Ascending aorta (tissue), 2 donors: ENCODE measurements at regions of chr5 and their contacts with region 1.

Region 1: DNA sequence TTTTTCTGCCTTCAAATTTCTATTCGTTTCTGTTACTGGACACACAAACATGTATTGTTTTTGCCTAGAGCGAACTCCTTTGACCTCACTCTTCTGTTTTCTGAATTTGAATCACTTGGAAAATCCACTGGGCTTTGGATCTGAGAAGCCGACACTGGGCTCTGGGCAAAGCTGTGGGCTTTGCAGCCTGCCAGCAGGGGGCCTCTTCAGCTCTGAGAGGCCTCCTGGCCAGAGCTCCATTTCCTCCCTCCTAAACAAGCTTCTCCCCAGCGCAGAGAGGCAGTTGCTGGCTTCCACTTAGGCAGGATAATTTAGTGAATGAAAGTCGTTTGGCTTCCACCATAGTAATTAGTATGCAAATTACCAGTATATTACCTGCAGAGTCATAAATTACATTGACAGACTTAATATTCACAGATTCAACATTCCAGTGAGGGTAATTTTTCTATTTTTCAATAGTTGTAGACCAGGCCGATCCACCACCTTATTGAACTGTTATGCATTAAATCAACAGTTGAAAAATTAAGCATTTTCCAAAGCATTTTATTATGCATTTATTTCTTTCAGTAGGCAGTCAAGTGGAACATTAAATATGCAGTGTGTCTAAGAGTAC is 104.0 kb upstream of the ZNF366 start:
- DNase-seq: peak in 1 of 2 donors; percentile 82
- H3K4me3 ChIP-seq: no peak overlapping the region
- H3K27ac ChIP-seq: no peak overlapping the region
- H3K4me1 ChIP-seq: no peaks in the 10 kb centered on the region
- H3K27me3 ChIP-seq: no peaks in the 10 kb centered on the region
- CTCF ChIP-seq: peak; percentile 67 to 90 (median 90)

Region 2: DNA sequence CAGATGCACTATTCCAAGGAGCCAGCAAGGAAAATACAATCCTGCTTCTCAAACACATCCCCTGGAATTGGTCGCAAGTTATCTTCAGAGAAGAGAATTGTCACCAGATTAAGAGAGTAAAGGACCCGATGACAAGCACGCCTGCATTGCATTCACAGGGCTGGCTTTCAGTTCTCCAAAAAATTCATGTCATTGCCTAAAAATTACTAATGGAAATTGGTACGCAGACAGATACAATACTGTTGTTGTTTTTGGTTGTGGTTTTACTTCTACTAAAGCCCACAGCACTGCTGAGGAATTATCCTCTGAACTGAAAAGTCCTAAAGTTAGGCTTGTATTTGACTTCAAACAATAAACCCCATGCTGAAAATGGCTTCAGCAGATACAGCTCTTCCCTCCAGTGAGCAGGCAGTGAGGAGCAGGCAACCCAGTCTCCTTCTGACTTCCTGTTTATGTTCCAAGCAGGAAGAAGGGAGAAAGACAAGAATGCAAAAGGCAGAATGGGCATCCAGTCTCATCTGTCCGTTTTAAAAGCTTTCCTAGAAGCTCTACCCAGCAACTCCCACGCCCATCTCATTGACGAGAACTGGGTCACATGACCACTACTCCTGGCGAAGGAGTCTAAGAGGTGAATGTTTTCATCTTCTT is 23.4 kb before region 1 on chr5:
- intact Hi-C with region 1: no loop called
- DNase-seq: no peak
- H3K4me3 ChIP-seq: no peak overlapping the region
- H3K27ac ChIP-seq: no peak overlapping the region
- H3K4me1 ChIP-seq: peaks cover 3% of the 10 kb centered on the region in 2 donors
- H3K27me3 ChIP-seq: no peaks in the 10 kb centered on the region
- CTCF ChIP-seq: no peak

Region 3: GRCh38 chr5:72723581-72723980 is 112.4 kb after region 1 on chr5:
- intact Hi-C with region 1: no loop called
- DNase-seq: no peak
- H3K4me3 ChIP-seq: no peak overlapping the region
- H3K27ac ChIP-seq: no peak overlapping the region
- H3K4me1 ChIP-seq: no peaks in the 10 kb centered on the region
- H3K27me3 ChIP-seq: no peaks in the 10 kb centered on the region
- CTCF ChIP-seq: no peak

Region 4: GRCh38 chr5:72842816-72843215 is 231.6 kb after region 1 on chr5:
- intact Hi-C with region 1: loop called (anchors 5 kb)
- DNase-seq: no peak
- H3K4me3 ChIP-seq: no peak overlapping the region
- H3K27ac ChIP-seq: no peak overlapping the region
- H3K4me1 ChIP-seq: peaks cover 20 to 45% of the 10 kb centered on the region in 2 donors
- H3K27me3 ChIP-seq: no peaks in the 10 kb centered on the region
- CTCF ChIP-seq: peak in 2 of 3 experiments; percentile 14 to 41